ENCODE measurements at regions of chr17 and their contacts with region 1.

Region 1: DNA sequence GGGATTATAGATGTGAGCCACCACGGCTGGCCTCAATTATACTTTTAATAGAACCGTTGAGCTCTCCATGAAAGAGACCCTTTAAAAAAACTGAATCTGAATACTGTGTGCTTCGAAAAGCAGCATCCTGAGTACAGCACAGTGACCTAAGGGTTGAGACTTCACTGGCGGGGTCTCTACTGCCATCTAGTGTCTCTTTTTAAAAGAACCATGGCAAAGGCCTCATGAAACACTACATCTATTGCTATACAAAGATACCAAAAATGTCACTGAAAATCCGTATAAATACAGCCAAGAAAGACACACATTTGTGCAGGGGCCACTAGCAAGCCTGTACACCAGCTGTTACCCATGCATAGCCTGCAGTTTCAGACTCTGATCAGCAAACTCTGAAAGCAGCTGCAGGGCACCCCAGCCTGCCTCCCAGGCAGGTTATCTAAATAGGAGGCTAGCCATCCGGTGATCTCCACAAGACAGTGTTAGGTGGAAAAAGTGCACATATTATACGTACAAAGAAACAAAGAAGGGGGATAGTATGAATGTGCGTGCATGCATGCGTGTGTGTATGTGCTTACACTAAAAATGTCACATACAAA is 35.3 kb downstream of the NPLOC4 start:
- DNase-seq: peak; percentile 58
- H3K4me3 Mint-ChIP-seq: no peak overlapping the region
- H3K27ac Mint-ChIP-seq: no peak overlapping the region
- H3K4me1 Mint-ChIP-seq: peaks cover 7% of the 10 kb centered on the region
- H3K27me3 Mint-ChIP-seq: no peaks in the 10 kb centered on the region

Region 2: GRCh38 chr17:81519284-81519955 is 82.2 kb before region 1 on chr17:
- CTCF ChIA-PET with region 1: interaction called, 16 read pairs
- DNase-seq: peak; percentile 78
- H3K4me3 Mint-ChIP-seq: peak overlapping the region; percentile 31
- H3K27ac Mint-ChIP-seq: no peak overlapping the region
- H3K4me1 Mint-ChIP-seq: peaks cover 27% of the 10 kb centered on the region
- H3K27me3 Mint-ChIP-seq: peaks cover 47% of the 10 kb centered on the region

Region 3: GRCh38 chr17:81615401-81615930 is 13.8 kb after region 1 on chr17:
- CTCF ChIA-PET with region 1: interaction called, 11 read pairs
- DNase-seq: no peak
- H3K4me3 Mint-ChIP-seq: no peak overlapping the region
- H3K27ac Mint-ChIP-seq: no peak overlapping the region
- H3K4me1 Mint-ChIP-seq: peaks cover 17% of the 10 kb centered on the region
- H3K27me3 Mint-ChIP-seq: no peaks in the 10 kb centered on the region